ENCODE measurements at regions of chr1 and their contacts with region 1.

Region 1: DNA sequence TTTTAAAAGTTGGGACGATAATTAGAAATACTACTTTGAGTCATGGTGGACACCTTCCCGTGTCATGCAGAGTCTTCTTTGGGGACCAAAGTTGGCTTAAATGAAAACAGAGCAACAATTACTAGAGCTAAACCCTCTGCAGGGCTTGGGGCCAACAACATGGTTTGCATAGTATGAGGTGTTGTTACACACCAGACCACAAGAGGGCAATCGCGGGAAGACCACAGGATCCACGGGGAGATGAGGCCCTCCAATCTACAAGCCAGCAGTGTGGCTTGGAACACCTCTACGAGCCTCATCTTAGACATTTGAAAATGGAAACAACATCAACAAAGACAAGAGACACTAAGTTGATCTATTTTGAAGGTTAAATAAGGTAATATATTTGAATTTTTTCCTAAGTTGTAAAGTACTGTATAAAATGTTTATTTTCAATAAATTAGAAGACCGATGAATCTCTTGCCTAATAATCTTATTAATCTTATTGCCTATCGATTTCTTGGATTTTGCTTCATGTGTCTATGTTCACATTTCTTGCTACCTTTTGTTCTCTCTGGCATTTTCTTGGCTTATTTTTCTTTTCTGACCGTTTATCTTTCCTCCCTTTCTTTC is 8.2 kb upstream of the SMCP start:
- DNase-seq: peak in 1 of 2 experiments; percentile 14
- H3K4me3 ChIP-seq: no peak overlapping the region
- H3K27ac ChIP-seq: no peak overlapping the region
- H3K4me1 ChIP-seq: peaks cover 9% of the 10 kb centered on the region; the same call in 1 of the 2 replicates
- H3K27me3 ChIP-seq: no peaks in the 10 kb centered on the region
- CTCF ChIP-seq: peak; percentile 65

Region 2: GRCh38 chr1:152756872-152757271 is 113.0 kb before region 1 on chr1:
- CTCF ChIA-PET with region 1: no interaction called
- POLR2A ChIA-PET with region 1: no interaction called
- intact Hi-C with region 1: no loop called
- DNase-seq: no peak
- H3K4me3 ChIP-seq: no peak overlapping the region
- H3K27ac ChIP-seq: no peak overlapping the region
- H3K4me1 ChIP-seq: no peaks in the 10 kb centered on the region
- H3K27me3 ChIP-seq: peaks cover 57% of the 10 kb centered on the region
- CTCF ChIP-seq: no peak

Region 3: DNA sequence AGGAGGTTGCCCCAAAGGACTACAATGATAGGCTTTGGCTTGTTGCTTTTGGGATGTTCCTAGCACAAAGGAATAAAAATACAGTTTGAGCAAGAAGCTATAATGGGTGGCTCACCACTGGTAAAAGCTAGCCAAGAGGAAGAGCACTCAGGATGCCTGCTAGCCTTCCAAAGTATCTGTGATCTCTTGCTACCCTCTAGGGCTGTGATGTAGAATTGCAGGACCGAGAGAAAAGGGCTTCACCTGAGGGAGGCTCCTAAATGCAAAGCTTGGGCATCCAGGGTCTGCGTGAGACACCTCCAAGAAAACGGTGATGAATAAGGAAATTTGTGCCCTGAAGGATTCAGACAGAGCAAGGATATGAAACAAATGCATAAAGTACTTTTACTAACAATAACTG is 56.2 kb after region 1 on chr1:
- CTCF ChIA-PET with region 1: interaction called, 4 read pairs
- POLR2A ChIA-PET with region 1: interaction called, 10 read pairs
- intact Hi-C with region 1: loop called (anchors 1 kb)
- DNase-seq: peak in 1 of 2 experiments; percentile 54
- H3K4me3 ChIP-seq: no peak overlapping the region
- H3K27ac ChIP-seq: no peak overlapping the region
- H3K4me1 ChIP-seq: no peaks in the 10 kb centered on the region; the same call in 1 of the 2 replicates
- H3K27me3 ChIP-seq: no peaks in the 10 kb centered on the region
- CTCF ChIP-seq: peak; percentile 77

Region 4: GRCh38 chr1:153032677-153033308 is 162.9 kb after region 1 on chr1:
- CTCF ChIA-PET with region 1: interaction called, 4 read pairs
- POLR2A ChIA-PET with region 1: no interaction called
- intact Hi-C with region 1: loop called (anchors 1 kb)
- DNase-seq: peak; percentile 71 to 96
- H3K4me3 ChIP-seq: no peak overlapping the region
- H3K27ac ChIP-seq: peak overlapping the region; percentile 48; the same call in 1 of the 2 replicates
- H3K4me1 ChIP-seq: peaks cover 37% of the 10 kb centered on the region
- H3K27me3 ChIP-seq: no peaks in the 10 kb centered on the region
- CTCF ChIP-seq: peak; percentile 64

Region 5: GRCh38 chr1:153180556-153180955 is 310.6 kb after region 1 on chr1:
- CTCF ChIA-PET with region 1: no interaction called
- POLR2A ChIA-PET with region 1: no interaction called
- intact Hi-C with region 1: no loop called
- DNase-seq: no peak
- H3K4me3 ChIP-seq: no peak overlapping the region
- H3K27ac ChIP-seq: no peak overlapping the region
- H3K4me1 ChIP-seq: no peaks in the 10 kb centered on the region
- H3K27me3 ChIP-seq: no peaks in the 10 kb centered on the region
- CTCF ChIP-seq: peak; percentile 23; the same call in 1 of the 2 replicates

Region 6: DNA sequence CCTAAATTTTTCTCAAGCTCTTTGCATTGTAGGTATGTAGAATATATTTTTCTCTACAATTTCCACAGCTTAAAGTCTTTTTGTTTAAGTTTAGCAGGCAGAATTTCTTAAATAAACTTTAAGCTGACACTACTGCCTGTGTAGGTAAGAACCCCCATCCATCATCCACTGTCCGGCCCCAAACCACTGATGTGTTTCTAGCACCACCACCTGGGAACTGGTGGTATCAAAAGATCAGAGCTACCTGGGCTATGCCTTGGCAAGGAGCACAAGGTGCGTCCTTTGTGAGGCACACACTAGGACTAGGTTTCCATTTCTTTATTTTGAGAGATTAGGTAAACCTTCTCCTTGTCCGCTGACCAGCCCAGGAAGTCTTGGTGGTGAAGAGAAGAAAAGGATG is 322.8 kb after region 1 on chr1:
- CTCF ChIA-PET with region 1: interaction called, 7 read pairs
- POLR2A ChIA-PET with region 1: no interaction called
- intact Hi-C with region 1: loop called (anchors 1 kb)
- DNase-seq: peak in 1 of 2 experiments; percentile 24
- H3K4me3 ChIP-seq: no peak overlapping the region
- H3K27ac ChIP-seq: no peak overlapping the region
- H3K4me1 ChIP-seq: no peaks in the 10 kb centered on the region
- H3K27me3 ChIP-seq: peaks cover 15% of the 10 kb centered on the region; the same call in 1 of the 2 replicates
- CTCF ChIP-seq: peak; percentile 84

Region 7: DNA sequence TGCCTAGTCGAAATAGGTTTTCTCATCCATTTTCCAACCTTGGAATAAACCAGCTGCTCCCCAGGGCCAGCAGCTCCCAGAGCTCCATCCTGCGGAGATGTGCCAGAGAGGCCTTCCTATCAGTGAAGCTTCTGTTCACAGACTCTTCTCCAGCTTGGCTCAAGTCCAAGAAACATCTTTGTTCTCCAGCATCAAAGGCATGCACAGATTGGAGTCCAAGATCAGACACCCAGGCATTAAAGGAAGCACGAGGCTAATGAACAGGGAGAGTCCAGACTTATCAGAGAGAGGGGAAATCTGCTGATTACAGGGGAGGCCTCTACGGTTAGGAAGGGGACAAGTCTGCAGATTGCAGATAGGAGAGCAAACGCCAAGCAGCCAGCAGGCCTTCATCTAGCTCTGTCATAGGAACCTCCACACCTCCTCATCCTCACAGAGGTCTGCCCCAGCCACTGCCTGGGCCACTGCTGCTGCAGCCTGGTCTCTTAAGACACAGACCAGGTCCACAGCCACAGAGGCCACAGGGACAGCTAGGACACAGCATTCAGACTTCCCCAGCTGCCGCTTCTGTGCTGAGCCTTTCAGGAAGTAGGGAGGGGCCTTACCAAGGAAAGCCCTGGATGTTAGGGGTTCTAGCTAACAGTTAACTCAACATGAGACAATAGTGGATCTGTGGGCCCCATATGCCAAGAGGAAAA is 350.8 kb after region 1 on chr1:
- CTCF ChIA-PET with region 1: no interaction called
- POLR2A ChIA-PET with region 1: no interaction called
- intact Hi-C with region 1: loop called (anchors 1 kb)
- DNase-seq: no peak
- H3K4me3 ChIP-seq: no peak overlapping the region
- H3K27ac ChIP-seq: no peak overlapping the region
- H3K4me1 ChIP-seq: no peaks in the 10 kb centered on the region
- H3K27me3 ChIP-seq: peaks cover 41% of the 10 kb centered on the region
- CTCF ChIP-seq: no peak